AG04450 (cell line): ENCODE measurements at regions of chr1 and their contacts with region 1.

Region 1: GRCh38 chr1:36187800-36188593 is 32.0 kb downstream of the MAP7D1 start:
- DNase-seq: peak; percentile 80
- H3K4me3 ChIP-seq: 0 out of 2 replicates have a peak overlapping the region, but pooled peaks have one; percentile 10
- H3K27ac ChIP-seq: peak overlapping the region; percentile 87
- H3K27me3 ChIP-seq: no peaks in the 10 kb centered on the region
- CTCF ChIP-seq: peak; percentile 91

Region 2: GRCh38 chr1:36055706-36056105 is 132.3 kb before region 1 on chr1:
- CTCF ChIA-PET with region 1: no interaction called
- POLR2A ChIA-PET with region 1: no interaction called
- DNase-seq: no peak
- H3K4me3 ChIP-seq: no peak overlapping the region
- H3K27ac ChIP-seq: no peak overlapping the region
- H3K27me3 ChIP-seq: no peaks in the 10 kb centered on the region
- CTCF ChIP-seq: no peak

Region 3: GRCh38 chr1:36134505-36135329 is 53.3 kb before region 1 on chr1:
- CTCF ChIA-PET with region 1: interaction called, 32 read pairs
- POLR2A ChIA-PET with region 1: interaction called, 4 read pairs
- DNase-seq: no peak
- H3K4me3 ChIP-seq: no peak overlapping the region
- H3K27ac ChIP-seq: peak overlapping the region; percentile 47
- H3K27me3 ChIP-seq: no peaks in the 10 kb centered on the region
- CTCF ChIP-seq: peak; percentile 68

Region 4: GRCh38 chr1:36155408-36156328 is 32.3 kb before region 1 on chr1 and contains the start of gene MAP7D1:
- CTCF ChIA-PET with region 1: interaction called, 75 read pairs
- POLR2A ChIA-PET with region 1: interaction called, 32 read pairs
- DNase-seq: no peak
- H3K4me3 ChIP-seq: peak within 1 kb of the TSS; percentile 94
- H3K27ac ChIP-seq: peak within 1 kb of the TSS; percentile 87
- H3K27me3 ChIP-seq: no peaks in the 10 kb centered on the region
- CTCF ChIP-seq: no peak
- polyA plus RNA-seq, gene MAP7D1: 23.4 and 28.2 TPM in 2 replicates

Region 5: GRCh38 chr1:36170643-36171412 is 17.2 kb before region 1 on chr1:
- CTCF ChIA-PET with region 1: interaction called, 21 read pairs
- POLR2A ChIA-PET with region 1: interaction called, 5 read pairs
- DNase-seq: no peak
- H3K4me3 ChIP-seq: no peak overlapping the region
- H3K27ac ChIP-seq: peak overlapping the region; percentile 21
- H3K27me3 ChIP-seq: no peaks in the 10 kb centered on the region
- CTCF ChIP-seq: no peak

Region 6: GRCh38 chr1:36223993-36224536 is 36.1 kb after region 1 on chr1 and contains the start of gene THRAP3:
- CTCF ChIA-PET with region 1: interaction called, 10 read pairs
- POLR2A ChIA-PET with region 1: interaction called, 7 read pairs
- DNase-seq: peak; percentile 98
- H3K4me3 ChIP-seq: peak within 1 kb of the TSS; percentile 97
- H3K27ac ChIP-seq: peak within 1 kb of the TSS; percentile 94
- H3K27me3 ChIP-seq: no peaks in the 10 kb centered on the region
- CTCF ChIP-seq: no peak
- polyA plus RNA-seq, gene THRAP3: 76.0 and 76.5 TPM in 2 replicates

Region 7: DNA sequence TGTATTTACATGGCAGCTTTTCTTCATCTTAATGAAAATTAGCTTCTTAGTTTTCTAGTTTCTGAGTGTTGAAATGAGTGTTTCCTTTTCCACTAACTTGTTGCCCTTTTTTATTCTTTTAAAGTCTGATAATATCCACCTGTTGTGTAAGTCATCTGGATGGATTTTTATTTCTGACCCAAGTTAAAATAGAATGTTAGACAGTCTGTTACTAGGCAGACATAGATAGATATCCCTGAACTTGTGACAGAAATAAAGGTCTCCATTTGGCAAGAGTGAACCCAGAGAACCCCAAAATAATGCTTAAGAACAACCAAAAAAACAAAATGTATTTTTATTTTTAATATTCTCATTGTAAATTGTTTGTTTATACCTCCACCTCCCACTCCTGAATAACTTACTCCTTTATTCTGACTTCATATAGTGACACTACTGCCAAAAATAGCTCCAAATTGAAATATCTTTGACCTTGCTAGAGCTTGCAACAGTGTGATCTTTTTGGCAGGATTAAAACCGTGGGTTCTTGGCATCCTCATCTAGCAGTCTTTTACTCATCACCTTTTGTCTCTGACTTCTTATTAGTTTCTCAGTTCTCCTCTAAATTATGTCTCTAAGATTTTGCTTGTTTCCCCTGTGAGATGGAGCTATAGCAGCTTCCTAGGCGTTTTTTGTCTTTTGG is 91.3 kb after region 1 on chr1:
- CTCF ChIA-PET with region 1: interaction called, 20 read pairs
- POLR2A ChIA-PET with region 1: no interaction called
- DNase-seq: no peak
- H3K4me3 ChIP-seq: no peak overlapping the region
- H3K27ac ChIP-seq: no peak overlapping the region
- H3K27me3 ChIP-seq: no peaks in the 10 kb centered on the region
- CTCF ChIP-seq: no peak

Region 8: GRCh38 chr1:36300526-36300925 is 112.5 kb after region 1 on chr1:
- CTCF ChIA-PET with region 1: interaction called, 11 read pairs
- POLR2A ChIA-PET with region 1: no interaction called
- DNase-seq: no peak
- H3K4me3 ChIP-seq: no peak overlapping the region
- H3K27ac ChIP-seq: peak overlapping the region; percentile 1
- H3K27me3 ChIP-seq: no peaks in the 10 kb centered on the region
- CTCF ChIP-seq: no peak

Region 9: GRCh38 chr1:36397378-36398230 is 209.6 kb after region 1 on chr1 and contains the start of gene LSM10:
- CTCF ChIA-PET with region 1: no interaction called
- POLR2A ChIA-PET with region 1: no interaction called
- DNase-seq: peak; percentile 74
- H3K4me3 ChIP-seq: peak within 1 kb of the TSS; percentile 84
- H3K27ac ChIP-seq: peak within 1 kb of the TSS; percentile 69
- H3K27me3 ChIP-seq: no peaks in the 10 kb centered on the region
- CTCF ChIP-seq: no peak
- polyA plus RNA-seq, gene LSM10: 50.8 and 63.6 TPM in 2 replicates